GM12878 (cell line): ENCODE measurements at regions of chr4 and their contacts with region 1.

Region 1: DNA sequence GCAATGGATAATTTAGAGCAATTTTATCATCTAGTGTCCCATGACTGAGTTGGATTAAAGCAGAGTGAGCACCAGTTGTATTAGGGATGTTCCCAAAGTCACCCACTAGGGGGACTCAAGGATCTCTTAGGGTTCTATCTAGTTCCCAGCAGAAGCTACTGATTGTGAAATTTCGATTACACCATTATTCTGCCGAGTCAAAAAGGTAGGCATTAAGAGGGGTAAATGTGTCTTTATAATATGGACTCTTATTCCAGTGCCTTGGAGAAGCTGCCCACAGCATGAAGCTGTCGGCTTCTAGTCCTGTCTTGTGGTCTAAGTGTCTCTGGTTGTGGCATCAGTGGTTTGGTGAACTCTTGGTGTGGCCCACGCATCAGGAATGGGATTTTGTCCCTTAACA is 53.3 kb downstream of the RGS12 start:
- DNase-seq: peak; percentile 30
- ATAC-seq: peak; percentile 100
- H3K4me3 ChIP-seq: no peak overlapping the region
- H3K27ac ChIP-seq: no peak overlapping the region
- H3K4me1 ChIP-seq: no peaks in the 10 kb centered on the region
- H3K27me3 ChIP-seq: no peaks in the 10 kb centered on the region
- CTCF ChIP-seq: peak; percentile 78 to 85 (median 79)
- EP300 ChIP-seq: no peak
- POLR2A ChIP-seq: no peak
- RAD21 ChIP-seq: peak; percentile 99

Region 2: DNA sequence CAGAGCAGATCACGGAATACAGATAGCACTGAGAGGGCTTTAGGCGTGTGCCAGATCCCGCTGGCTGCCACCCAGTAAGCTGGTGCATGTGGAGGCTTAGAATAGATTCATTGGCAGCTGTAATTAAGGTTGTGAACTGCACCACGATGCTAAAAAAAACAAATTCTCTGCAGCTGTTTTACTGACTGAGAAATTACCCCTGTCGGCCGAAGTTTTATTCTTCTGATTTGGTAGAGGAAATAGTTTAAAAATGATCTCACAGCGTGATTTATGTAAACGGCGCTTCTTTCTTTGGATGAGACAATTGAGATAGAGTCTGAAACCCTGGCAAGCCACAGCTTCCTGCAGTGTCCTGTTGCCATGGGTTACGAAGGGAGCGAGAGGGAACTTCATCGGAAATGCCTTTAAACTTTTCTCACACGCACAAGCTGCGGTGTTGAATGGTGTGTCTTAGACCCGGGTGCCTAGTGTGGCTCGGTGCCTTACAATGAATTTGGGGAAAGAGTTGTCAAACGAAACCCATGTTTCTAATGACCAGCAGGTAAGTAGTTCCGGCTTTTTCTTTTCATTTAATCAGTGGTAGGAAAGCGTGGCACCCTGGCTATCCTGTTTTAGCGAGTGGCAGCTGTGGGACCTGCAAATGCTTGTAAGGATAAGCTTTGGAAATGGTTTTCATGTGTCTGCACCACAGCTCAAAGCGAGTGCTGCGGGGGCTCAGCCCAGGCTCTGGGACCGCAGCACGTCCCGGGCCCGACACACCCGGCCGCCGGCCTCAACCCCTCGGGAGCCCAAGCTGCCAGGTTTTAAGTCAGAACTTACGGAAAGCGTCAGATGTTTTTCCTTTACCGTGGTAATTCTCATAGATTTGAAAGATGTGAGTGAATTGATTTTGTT is 23.9 kb after region 1 on chr4:
- CTCF ChIA-PET with region 1: interaction called, 10 read pairs
- POLR2A ChIA-PET with region 1: no interaction called
- RAD21 ChIA-PET with region 1: interaction called, 6 read pairs
- SMC1A ChIA-PET with region 1: interaction called, 11 read pairs
- in situ Hi-C with region 1: no loop called
- intact Hi-C with region 1: no loop called
- DNase-seq: no peak
- ATAC-seq: peak; percentile 9; the same call in 2 of the 3 replicates
- H3K4me3 ChIP-seq: peak overlapping the region; percentile 2; the same call in 1 of the 2 replicates
- H3K27ac ChIP-seq: no peak overlapping the region
- H3K4me1 ChIP-seq: peaks cover 21% of the 10 kb centered on the region
- H3K27me3 ChIP-seq: peaks cover 0 to 2% of the 10 kb centered on the region in 2 experiments; a peak in 1 of 4 replicates
- CTCF ChIP-seq: no peak
- EP300 ChIP-seq: no peak
- POLR2A ChIP-seq: no peak
- RAD21 ChIP-seq: no peak

Region 3: GRCh38 chr4:3427706-3428446 is 81.7 kb after region 1 on chr4:
- CTCF ChIA-PET with region 1: interaction called, 12 read pairs
- POLR2A ChIA-PET with region 1: no interaction called
- RAD21 ChIA-PET with region 1: interaction called, 5 read pairs
- SMC1A ChIA-PET with region 1: interaction called, 6 read pairs
- in situ Hi-C with region 1: no loop called
- intact Hi-C with region 1: no loop called
- DNase-seq: no peak
- ATAC-seq: no peak
- H3K4me3 ChIP-seq: no peak overlapping the region
- H3K27ac ChIP-seq: no peak overlapping the region
- H3K4me1 ChIP-seq: no peaks in the 10 kb centered on the region
- H3K27me3 ChIP-seq: no peaks in the 10 kb centered on the region
- CTCF ChIP-seq: no peak
- EP300 ChIP-seq: no peak
- POLR2A ChIP-seq: no peak
- RAD21 ChIP-seq: no peak

Region 4: DNA sequence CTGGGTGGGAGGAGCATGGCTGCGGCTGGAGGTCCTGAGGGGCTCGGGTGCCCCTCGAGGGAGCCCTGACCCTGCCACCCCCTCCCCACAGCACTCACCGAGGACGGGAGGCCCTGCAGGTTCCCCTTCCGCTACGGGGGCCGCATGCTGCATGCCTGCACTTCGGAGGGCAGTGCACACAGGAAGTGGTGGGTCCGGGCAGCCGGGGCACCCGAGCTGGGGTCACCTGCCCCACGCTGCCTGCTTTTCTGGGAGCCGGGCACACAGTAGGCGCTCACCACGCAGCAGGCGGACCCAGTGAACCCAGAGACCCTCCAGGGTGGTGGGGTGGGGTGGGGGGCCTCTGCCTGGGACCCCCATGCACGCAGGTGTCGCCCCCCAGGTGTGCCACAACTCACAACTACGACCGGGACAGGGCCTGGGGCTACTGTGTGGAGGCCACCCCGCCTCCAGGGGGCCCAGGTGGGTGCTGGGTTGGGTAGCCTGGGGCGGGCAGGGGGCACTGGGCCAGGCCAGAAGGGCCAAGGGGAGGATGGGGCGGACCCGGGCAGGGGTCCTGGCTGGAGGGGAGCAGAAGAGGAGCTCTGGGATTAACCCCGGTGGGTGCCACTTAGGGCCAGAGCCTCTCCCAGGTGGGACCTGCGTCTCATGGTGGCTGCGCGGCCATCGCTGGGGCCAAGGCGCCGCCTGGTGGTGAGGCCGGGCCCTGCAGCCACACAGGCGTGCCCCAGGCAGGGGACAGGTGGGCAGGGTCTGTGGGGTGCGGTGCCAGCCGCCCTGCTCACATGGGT is 97.0 kb after region 1 on chr4:
- CTCF ChIA-PET with region 1: interaction called, 81 read pairs
- POLR2A ChIA-PET with region 1: interaction called, 3 read pairs
- RAD21 ChIA-PET with region 1: interaction called, 16 read pairs
- SMC1A ChIA-PET with region 1: interaction called, 35 read pairs
- in situ Hi-C with region 1: loop called (anchors 5 kb)
- intact Hi-C with region 1: loop called (anchors 1 kb)
- DNase-seq: no peak
- ATAC-seq: peak; percentile 95
- H3K4me3 ChIP-seq: no peak overlapping the region
- H3K27ac ChIP-seq: no peak overlapping the region
- H3K4me1 ChIP-seq: no peaks in the 10 kb centered on the region
- H3K27me3 ChIP-seq: no peaks in the 10 kb centered on the region
- CTCF ChIP-seq: peak; percentile 96 to 99 (median 98); a peak in 5 of 6 replicates
- EP300 ChIP-seq: no peak
- POLR2A ChIP-seq: no peak
- RAD21 ChIP-seq: peak; percentile 90

Region 5: DNA sequence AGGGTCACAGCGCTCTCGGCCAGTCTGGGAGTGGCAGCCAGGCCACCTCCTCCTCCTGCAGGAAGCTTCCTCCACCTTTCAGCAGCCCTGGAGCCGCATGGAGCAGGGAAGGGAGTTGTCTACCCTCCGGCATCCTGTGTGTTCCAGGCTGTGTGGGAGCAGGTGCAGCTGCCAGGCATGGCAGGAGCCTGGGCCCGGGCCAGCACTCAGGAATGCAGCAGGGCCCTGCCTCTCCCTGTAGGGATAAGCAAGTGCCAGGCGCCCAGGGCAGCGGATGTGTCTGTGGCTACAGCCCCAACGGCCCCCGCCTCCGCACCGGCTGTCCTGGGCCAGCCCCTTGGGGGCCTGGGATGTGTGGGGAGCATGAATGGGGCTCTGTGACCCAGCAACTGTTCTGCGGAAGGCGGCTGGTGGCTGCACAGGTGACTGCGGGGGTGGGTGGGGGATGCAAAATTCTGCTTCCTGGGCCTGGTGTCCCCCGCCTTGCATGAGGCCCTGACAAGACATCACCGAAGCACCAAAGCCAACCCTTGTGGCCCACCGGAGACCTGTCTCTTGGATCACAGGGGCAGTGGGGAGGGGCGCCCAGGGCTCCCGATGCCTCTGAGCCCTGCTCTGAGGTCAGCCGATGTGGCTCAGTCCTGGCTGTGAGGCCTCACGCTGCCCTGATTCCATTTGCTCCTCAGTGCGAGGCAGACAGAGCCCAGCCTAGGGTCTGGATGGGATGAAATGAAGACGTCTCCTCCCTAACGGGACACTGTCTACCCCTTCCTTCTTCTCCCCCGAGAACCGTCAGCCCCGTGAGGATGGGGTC is 115.5 kb after region 1 on chr4:
- CTCF ChIA-PET with region 1: no interaction called
- POLR2A ChIA-PET with region 1: no interaction called
- RAD21 ChIA-PET with region 1: no interaction called
- SMC1A ChIA-PET with region 1: no interaction called
- in situ Hi-C with region 1: no loop called
- intact Hi-C with region 1: no loop called
- DNase-seq: no peak
- ATAC-seq: no peak; the same call in 2 of the 3 replicates
- H3K4me3 ChIP-seq: no peak overlapping the region
- H3K27ac ChIP-seq: no peak overlapping the region
- H3K4me1 ChIP-seq: no peaks in the 10 kb centered on the region
- H3K27me3 ChIP-seq: peaks cover 0 to 5% of the 10 kb centered on the region in 2 experiments; a peak in 2 of 4 replicates
- CTCF ChIP-seq: no peak
- EP300 ChIP-seq: no peak
- POLR2A ChIP-seq: no peak
- RAD21 ChIP-seq: no peak

Region 6: GRCh38 chr4:3480528-3481112 is 134.5 kb after region 1 on chr4:
- CTCF ChIA-PET with region 1: interaction called, 10 read pairs
- POLR2A ChIA-PET with region 1: no interaction called
- RAD21 ChIA-PET with region 1: interaction called, 19 read pairs
- SMC1A ChIA-PET with region 1: interaction called, 7 read pairs
- in situ Hi-C with region 1: no loop called
- intact Hi-C with region 1: loop called (anchors 1 kb)
- DNase-seq: no peak
- ATAC-seq: peak; percentile 78
- H3K4me3 ChIP-seq: no peak overlapping the region
- H3K27ac ChIP-seq: no peak overlapping the region
- H3K4me1 ChIP-seq: no peaks in the 10 kb centered on the region; the same call in 1 of the 2 replicates
- H3K27me3 ChIP-seq: peaks cover 2 to 6% of the 10 kb centered on the region in 2 experiments; a peak in 3 of 4 replicates
- CTCF ChIP-seq: peak; percentile 86 to 99 (median 98)
- EP300 ChIP-seq: no peak
- POLR2A ChIP-seq: no peak
- RAD21 ChIP-seq: peak; percentile 75

Region 7: GRCh38 chr4:3710451-3711182 is 364.5 kb after region 1 on chr4:
- CTCF ChIA-PET with region 1: no interaction called
- POLR2A ChIA-PET with region 1: no interaction called
- RAD21 ChIA-PET with region 1: no interaction called
- SMC1A ChIA-PET with region 1: no interaction called
- in situ Hi-C with region 1: no loop called
- intact Hi-C with region 1: no loop called
- DNase-seq: no peak
- ATAC-seq: no peak
- H3K4me3 ChIP-seq: no peak overlapping the region
- H3K27ac ChIP-seq: no peak overlapping the region
- H3K4me1 ChIP-seq: peaks cover 4% of the 10 kb centered on the region; the same call in 1 of the 2 replicates
- H3K27me3 ChIP-seq: no peaks in the 10 kb centered on the region
- CTCF ChIP-seq: no peak
- EP300 ChIP-seq: no peak
- POLR2A ChIP-seq: no peak
- RAD21 ChIP-seq: no peak